MCF 10A (cell line): ENCODE measurements at regions of chr9 and their contacts with region 1.

Region 1: DNA sequence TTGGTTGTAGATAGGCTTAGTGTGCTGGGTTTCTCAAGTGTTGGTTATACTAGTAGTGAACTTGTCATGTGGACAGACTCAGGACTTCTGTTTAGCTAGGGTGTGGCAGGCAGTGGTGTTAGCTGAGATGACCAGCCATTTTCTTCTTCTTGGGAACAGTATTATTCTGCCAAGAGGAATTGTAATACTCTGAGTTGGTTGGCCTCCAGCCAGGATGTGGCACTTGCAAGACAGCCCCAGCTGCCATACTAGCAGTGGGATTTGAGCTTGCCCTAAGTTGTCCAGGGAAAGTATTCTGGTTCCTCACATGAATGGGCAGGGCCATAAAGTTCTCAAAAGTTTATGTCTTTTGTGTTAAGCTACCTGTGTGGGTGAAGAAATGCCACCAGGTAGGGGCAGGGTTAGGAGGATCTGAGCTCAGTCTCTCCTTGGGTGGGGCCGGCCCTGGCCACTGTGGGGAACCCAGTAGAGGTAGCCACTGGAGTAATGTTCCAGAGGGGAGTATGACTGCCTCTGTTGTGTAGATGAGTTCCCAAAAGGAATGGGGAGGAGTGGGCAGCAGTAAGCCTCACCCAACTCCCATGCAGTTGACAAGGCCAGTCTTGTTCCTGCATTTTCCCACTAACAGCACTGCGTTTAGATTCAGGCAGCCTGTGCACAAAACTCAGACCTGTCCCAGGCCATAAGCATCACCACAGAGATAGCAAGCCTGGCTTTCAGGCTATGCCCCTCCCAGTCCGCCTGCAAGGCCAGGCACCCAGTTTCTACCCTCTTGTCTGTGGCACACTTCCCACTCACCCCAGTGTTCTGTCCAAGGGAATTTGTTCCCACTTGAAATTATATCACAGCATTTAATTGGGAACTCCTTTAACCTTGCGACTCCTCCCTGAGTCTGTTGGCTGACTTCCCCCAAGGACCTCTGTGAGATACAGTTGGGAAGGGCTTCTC is 250.7 kb downstream of the ANXA1 start:
- DNase-seq: peak; percentile 8
- H3K4me3 Mint-ChIP-seq: no peak overlapping the region
- H3K27ac Mint-ChIP-seq: no peak overlapping the region
- H3K4me1 Mint-ChIP-seq: no peaks in the 10 kb centered on the region
- H3K27me3 Mint-ChIP-seq: peaks cover 22% of the 10 kb centered on the region
- CTCF ChIP-seq: no peak

Region 2: GRCh38 chr9:73497796-73498195 is 95.4 kb after region 1 on chr9:
- CTCF ChIA-PET with region 1: no interaction called
- POLR2A ChIA-PET with region 1: no interaction called
- intact Hi-C with region 1: loop called (anchors 10 kb)
- DNase-seq: no peak
- H3K4me3 Mint-ChIP-seq: no peak overlapping the region
- H3K27ac Mint-ChIP-seq: no peak overlapping the region
- H3K4me1 Mint-ChIP-seq: no peaks in the 10 kb centered on the region
- H3K27me3 Mint-ChIP-seq: peaks cover 35% of the 10 kb centered on the region
- CTCF ChIP-seq: no peak